AG04450 (cell line): ENCODE measurements at regions of chr7 and their contacts with region 1.

Region 1: DNA sequence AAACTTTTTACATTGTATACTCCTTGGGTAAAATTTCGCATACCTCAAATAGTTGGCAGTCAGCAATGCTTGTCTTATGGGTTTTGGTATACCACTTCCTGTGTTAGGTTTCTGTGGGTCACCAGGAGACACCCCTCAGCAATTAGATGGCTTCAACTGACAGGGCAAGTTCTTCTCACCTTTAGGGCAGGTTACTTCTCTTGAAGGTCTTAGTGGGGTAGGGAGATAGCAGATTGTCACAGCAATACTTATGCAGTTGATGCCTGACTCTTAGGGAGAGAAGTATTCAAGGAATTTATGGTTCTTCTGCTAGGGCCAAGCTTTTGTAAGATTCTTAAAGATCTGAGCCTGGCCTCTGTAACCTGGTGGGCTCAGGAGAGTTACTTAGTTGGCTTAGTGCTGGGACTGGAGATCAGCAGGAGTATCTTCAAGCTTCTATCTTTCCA is 42.9 kb downstream of the MKLN1 start:
- DNase-seq: no peak
- H3K4me3 ChIP-seq: no peak overlapping the region
- H3K27ac ChIP-seq: no peak overlapping the region
- H3K27me3 ChIP-seq: no peaks in the 10 kb centered on the region
- CTCF ChIP-seq: no peak

Region 2: GRCh38 chr7:131225619-131226513 is 144.7 kb before region 1 on chr7:
- CTCF ChIA-PET with region 1: no interaction called
- POLR2A ChIA-PET with region 1: interaction called, 11 read pairs
- DNase-seq: no peak
- H3K4me3 ChIP-seq: no peak overlapping the region
- H3K27ac ChIP-seq: peak overlapping the region; percentile 65
- H3K27me3 ChIP-seq: no peaks in the 10 kb centered on the region
- CTCF ChIP-seq: no peak